ENCODE measurements at regions of chr1 and their contacts with region 1.

Region 1: DNA sequence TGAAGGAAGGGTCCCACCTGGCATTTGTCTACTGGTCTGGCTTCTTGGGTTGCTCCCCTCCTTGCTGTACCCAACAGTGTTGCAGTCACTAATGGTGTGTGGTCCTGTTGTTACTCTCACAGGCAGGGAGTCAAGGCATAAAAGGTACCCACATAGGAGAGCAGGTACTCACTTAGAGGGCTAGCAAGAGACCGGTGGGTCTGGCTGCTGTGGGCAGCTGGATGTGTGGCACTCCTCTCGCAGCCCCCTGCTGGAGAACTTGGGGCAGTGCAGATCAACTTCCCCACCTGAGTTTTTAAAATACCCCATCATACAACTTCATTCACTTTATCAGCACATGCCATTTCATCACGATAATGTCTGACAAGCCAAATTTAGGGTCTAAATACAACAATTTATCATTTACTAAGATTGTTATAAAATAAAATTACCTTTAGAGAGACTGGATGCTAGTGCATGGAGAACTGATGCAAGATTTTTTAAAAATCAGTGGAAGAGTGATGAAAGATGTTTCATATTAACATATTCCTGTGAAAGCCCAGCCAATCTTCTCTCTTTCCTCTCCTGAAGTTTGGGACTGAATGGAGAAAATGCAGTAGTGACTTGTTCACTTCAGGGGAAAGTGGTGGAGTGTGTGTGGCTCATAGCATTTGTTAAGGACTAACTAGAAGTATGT is 42.8 kb downstream of the ACP6 start:
- DNase-seq: no peak
- ATAC-seq: peak; percentile 92
- H3K4me3 ChIP-seq: no peak overlapping the region
- H3K27ac ChIP-seq: no peak overlapping the region
- H3K4me1 ChIP-seq: peaks cover 3% of the 10 kb centered on the region; the same call in 1 of the 2 replicates
- H3K27me3 ChIP-seq: no peaks in the 10 kb centered on the region
- CTCF ChIP-seq: peak; percentile 74 to 91 (median 84)
- EP300 ChIP-seq: no peak
- POLR2A ChIP-seq: no peak
- RAD21 ChIP-seq: peak; percentile 63

Region 2: GRCh38 chr1:147494998-147495580 is 132.5 kb before region 1 on chr1:
- CTCF ChIA-PET with region 1: interaction called, 19 read pairs
- POLR2A ChIA-PET with region 1: no interaction called
- RAD21 ChIA-PET with region 1: interaction called, 3 read pairs
- SMC1A ChIA-PET with region 1: interaction called, 3 read pairs
- in situ Hi-C with region 1: no loop called
- intact Hi-C with region 1: loop called (anchors 1 kb)
- DNase-seq: peak; percentile 13
- ATAC-seq: peak; percentile 99
- H3K4me3 ChIP-seq: no peak overlapping the region
- H3K27ac ChIP-seq: no peak overlapping the region
- H3K4me1 ChIP-seq: no peaks in the 10 kb centered on the region
- H3K27me3 ChIP-seq: no peaks in the 10 kb centered on the region
- CTCF ChIP-seq: peak; percentile 90 to 94 (median 93)
- EP300 ChIP-seq: no peak
- POLR2A ChIP-seq: no peak
- RAD21 ChIP-seq: peak; percentile 92

Region 3: DNA sequence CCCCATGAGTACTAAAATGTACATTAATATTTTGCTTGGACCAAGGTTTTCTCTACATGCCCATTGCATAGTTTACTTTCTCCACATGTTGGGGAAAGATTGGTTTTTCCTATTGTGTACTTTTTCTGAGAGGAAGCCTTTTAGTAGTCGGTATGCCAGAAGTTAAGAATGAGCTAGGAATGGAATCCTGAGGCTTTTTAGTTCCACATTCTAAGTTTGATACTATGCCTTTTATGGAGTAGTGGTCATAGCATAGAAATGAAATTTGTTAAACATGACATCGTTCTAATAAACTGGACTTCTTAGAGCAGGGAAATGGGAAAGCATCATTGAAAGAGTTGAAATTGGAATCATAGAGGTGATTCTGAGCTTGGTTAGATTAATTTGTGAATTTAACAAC is 22.0 kb before region 1 on chr1:
- CTCF ChIA-PET with region 1: interaction called, 10 read pairs
- POLR2A ChIA-PET with region 1: no interaction called
- RAD21 ChIA-PET with region 1: no interaction called
- SMC1A ChIA-PET with region 1: interaction called, 8 read pairs
- in situ Hi-C with region 1: no loop called
- intact Hi-C with region 1: no loop called
- DNase-seq: no peak
- ATAC-seq: no peak
- H3K4me3 ChIP-seq: no peak overlapping the region
- H3K27ac ChIP-seq: no peak overlapping the region
- H3K4me1 ChIP-seq: peaks cover 16% of the 10 kb centered on the region
- H3K27me3 ChIP-seq: no peaks in the 10 kb centered on the region
- CTCF ChIP-seq: no peak
- EP300 ChIP-seq: no peak
- POLR2A ChIP-seq: no peak
- RAD21 ChIP-seq: no peak

Region 4: GRCh38 chr1:147640553-147641165 is 13.1 kb after region 1 on chr1:
- CTCF ChIA-PET with region 1: interaction called, 16 read pairs
- POLR2A ChIA-PET with region 1: no interaction called
- RAD21 ChIA-PET with region 1: no interaction called
- SMC1A ChIA-PET with region 1: interaction called, 4 read pairs
- in situ Hi-C with region 1: no loop called
- intact Hi-C with region 1: no loop called
- DNase-seq: no peak
- ATAC-seq: peak; percentile 100
- H3K4me3 ChIP-seq: no peak overlapping the region
- H3K27ac ChIP-seq: no peak overlapping the region
- H3K4me1 ChIP-seq: no peaks in the 10 kb centered on the region
- H3K27me3 ChIP-seq: no peaks in the 10 kb centered on the region
- CTCF ChIP-seq: peak; percentile 92 to 98 (median 92)
- EP300 ChIP-seq: no peak
- POLR2A ChIP-seq: no peak
- RAD21 ChIP-seq: peak; percentile 57

Region 5: GRCh38 chr1:147676290-147677053 is 48.9 kb after region 1 on chr1:
- CTCF ChIA-PET with region 1: no interaction called
- POLR2A ChIA-PET with region 1: no interaction called
- RAD21 ChIA-PET with region 1: no interaction called
- SMC1A ChIA-PET with region 1: no interaction called
- in situ Hi-C with region 1: no loop called
- intact Hi-C with region 1: no loop called
- DNase-seq: no peak
- ATAC-seq: no peak
- H3K4me3 ChIP-seq: no peak overlapping the region
- H3K27ac ChIP-seq: no peak overlapping the region
- H3K4me1 ChIP-seq: no peaks in the 10 kb centered on the region
- H3K27me3 ChIP-seq: no peaks in the 10 kb centered on the region
- CTCF ChIP-seq: no peak
- EP300 ChIP-seq: no peak
- POLR2A ChIP-seq: no peak
- RAD21 ChIP-seq: no peak